ENCODE measurements at regions of chrX and their contacts with region 1.

Region 1: GRCh38 chrX:2498781-2499302 is 1.9 kb downstream of the DHRSX start:
- DNase-seq: peak in 1 of 3 donors; percentile 71
- ATAC-seq: peak; percentile 23 to 61
- H3K4me3 ChIP-seq: peak overlapping the region; percentile 100
- H3K27ac ChIP-seq: peak overlapping the region; percentile 89
- H3K4me1 ChIP-seq: peaks cover 2% of the 10 kb centered on the region
- H3K27me3 ChIP-seq: no peaks in the 10 kb centered on the region

Region 2: DNA sequence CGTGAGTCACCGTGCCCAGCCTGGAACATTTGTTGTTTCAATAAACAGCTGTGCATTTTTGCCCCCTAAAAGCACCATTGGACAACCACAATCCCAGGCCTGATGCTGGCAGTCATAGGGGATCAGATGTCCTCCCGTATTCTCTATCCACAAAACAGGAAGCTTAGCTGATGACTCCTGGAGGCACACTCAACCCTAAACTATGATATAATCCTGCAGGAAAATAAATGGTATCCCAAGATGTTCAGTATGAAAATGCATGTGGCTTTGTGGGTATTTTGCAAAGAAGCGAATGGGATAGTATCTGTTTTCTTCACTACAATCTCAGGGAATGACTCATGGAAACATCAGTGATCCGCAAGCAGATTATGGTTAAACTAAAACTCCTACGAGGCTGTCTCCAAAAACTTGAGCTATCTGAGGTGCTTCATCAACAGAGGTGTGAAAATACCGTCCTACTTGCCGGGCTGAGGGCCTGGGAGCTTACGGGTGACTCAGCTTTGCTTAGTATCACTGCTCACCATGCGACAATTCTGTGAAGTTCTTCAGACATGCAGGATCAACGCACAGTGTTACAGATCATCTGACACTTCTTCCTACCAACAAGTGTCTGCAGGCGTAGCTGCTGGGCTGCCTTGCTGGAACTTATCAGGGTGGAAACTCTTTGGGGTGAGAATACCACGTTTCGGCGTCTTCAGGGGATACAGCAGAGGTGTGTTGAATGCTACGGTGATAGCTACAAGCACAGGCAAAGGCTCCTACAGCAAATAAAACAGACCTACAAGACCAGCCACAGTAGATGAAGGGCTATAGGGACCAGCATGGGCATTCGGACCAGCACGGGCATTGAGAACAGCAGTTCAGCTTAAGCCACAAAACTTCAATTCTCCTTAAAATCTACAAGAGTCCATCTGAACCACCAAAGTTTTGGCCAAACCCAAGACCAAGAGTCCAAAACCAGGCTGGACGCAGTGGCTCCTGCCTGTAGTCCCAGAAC is 146.5 kb before region 1 on chrX:
- intact Hi-C with region 1: loop called in 1 of 4 experiments (anchors 10 kb)
- DNase-seq: no peak
- ATAC-seq: peak; percentile 77 to 85
- H3K4me3 ChIP-seq: no peak overlapping the region
- H3K27ac ChIP-seq: peak overlapping the region; percentile 54
- H3K4me1 ChIP-seq: peaks cover 5% of the 10 kb centered on the region
- H3K27me3 ChIP-seq: no peaks in the 10 kb centered on the region

Region 3: GRCh38 chrX:2552620-2553201 is 53.9 kb after region 1 on chrX:
- intact Hi-C with region 1: no loop called
- DNase-seq: no peak
- ATAC-seq: no peak
- H3K4me3 ChIP-seq: no peak overlapping the region
- H3K27ac ChIP-seq: no peak overlapping the region
- H3K4me1 ChIP-seq: no peaks in the 10 kb centered on the region
- H3K27me3 ChIP-seq: no peaks in the 10 kb centered on the region

Measured in right cardiac atrium (tissue), 5 donors.